ENCODE measurements at regions of chr12 and their contacts with region 1.

Region 1: GRCh38 chr12:99553459-99553858 is 94.1 kb upstream of the GARIN6 start:
- DNase-seq: no peak
- H3K4me3 ChIP-seq: no peak overlapping the region
- H3K27ac ChIP-seq: no peak overlapping the region
- H3K4me1 ChIP-seq: no peaks in the 10 kb centered on the region
- H3K27me3 ChIP-seq: no peaks in the 10 kb centered on the region
- CTCF ChIP-seq: no peak

Region 2: GRCh38 chr12:98916106-98916505 is 637.4 kb before region 1 on chr12:
- CTCF ChIA-PET with region 1: no interaction called
- dilution Hi-C with region 1: no loop called
- in situ Hi-C with region 1: no loop called
- intact Hi-C with region 1: no loop called
- DNase-seq: no peak
- H3K4me3 ChIP-seq: no peak overlapping the region
- H3K27ac ChIP-seq: no peak overlapping the region
- H3K4me1 ChIP-seq: no peaks in the 10 kb centered on the region
- H3K27me3 ChIP-seq: no peaks in the 10 kb centered on the region
- CTCF ChIP-seq: no peak

Region 3: GRCh38 chr12:99505805-99506204 is 47.7 kb before region 1 on chr12:
- CTCF ChIA-PET with region 1: no interaction called
- dilution Hi-C with region 1: no loop called
- in situ Hi-C with region 1: no loop called
- intact Hi-C with region 1: no loop called
- DNase-seq: peak; percentile 32
- H3K4me3 ChIP-seq: no peak overlapping the region
- H3K27ac ChIP-seq: no peak overlapping the region
- H3K4me1 ChIP-seq: no peaks in the 10 kb centered on the region
- H3K27me3 ChIP-seq: peaks cover 3% of the 10 kb centered on the region
- CTCF ChIP-seq: no peak

Region 4: DNA sequence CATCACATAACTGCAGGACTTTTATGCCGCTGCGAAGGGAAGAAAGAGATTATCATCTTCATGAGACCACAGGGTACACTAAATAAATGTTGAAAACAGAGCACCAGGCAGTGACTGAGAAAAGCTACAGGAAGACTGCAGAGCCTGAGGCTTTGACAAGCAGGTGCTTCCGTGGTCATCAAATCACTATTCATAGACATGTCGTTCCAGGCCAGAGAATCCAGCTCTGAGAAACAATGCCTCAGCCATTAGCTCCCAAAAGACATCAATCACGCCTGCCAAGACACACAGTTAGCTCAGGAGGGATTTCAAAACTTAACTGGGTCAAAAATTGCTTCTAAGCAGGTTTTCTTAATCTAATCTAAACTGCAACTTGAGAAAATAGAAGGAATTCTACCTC is 46.9 kb after region 1 on chr12:
- CTCF ChIA-PET with region 1: no interaction called
- dilution Hi-C with region 1: loop called (anchors 5 kb)
- in situ Hi-C with region 1: no loop called
- intact Hi-C with region 1: no loop called
- DNase-seq: no peak
- H3K4me3 ChIP-seq: no peak overlapping the region
- H3K27ac ChIP-seq: no peak overlapping the region
- H3K4me1 ChIP-seq: no peaks in the 10 kb centered on the region
- H3K27me3 ChIP-seq: no peaks in the 10 kb centered on the region
- CTCF ChIP-seq: no peak

Region 5: GRCh38 chr12:99619389-99620158 is 66.1 kb after region 1 on chr12:
- CTCF ChIA-PET with region 1: no interaction called
- dilution Hi-C with region 1: no loop called
- in situ Hi-C with region 1: no loop called
- intact Hi-C with region 1: no loop called
- DNase-seq: peak; percentile 37
- H3K4me3 ChIP-seq: no peak overlapping the region
- H3K27ac ChIP-seq: no peak overlapping the region
- H3K4me1 ChIP-seq: no peaks in the 10 kb centered on the region
- H3K27me3 ChIP-seq: no peaks in the 10 kb centered on the region
- CTCF ChIP-seq: peak; percentile 51 to 81

Region 6: GRCh38 chr12:100573292-100574186 is 1020.1 kb after region 1 on chr12 and contains the start of gene GAS2L3:
- CTCF ChIA-PET with region 1: no interaction called
- dilution Hi-C with region 1: no loop called
- in situ Hi-C with region 1: no loop called
- intact Hi-C with region 1: no loop called
- DNase-seq: peak; percentile 82
- H3K4me3 ChIP-seq: peak within 1 kb of the TSS; percentile 71 to 92 (median 74)
- H3K27ac ChIP-seq: peak within 1 kb of the TSS; percentile 82
- H3K4me1 ChIP-seq: peaks cover 10% of the 10 kb centered on the region
- H3K27me3 ChIP-seq: no peaks in the 10 kb centered on the region
- CTCF ChIP-seq: no peak
- total RNA-seq, gene GAS2L3: 4.0 to 17.7 TPM

Measured in mammary epithelial cell (primary cell).